GM12878 (cell line): ENCODE measurements at regions of chr1 and their contacts with region 1.

Region 1: GRCh38 chr1:37692078-37692833 is at the start of gene CDCA8:
- DNase-seq: peak; percentile 93
- ATAC-seq: peak; percentile 93
- H3K4me3 ChIP-seq: peak within 1 kb of the TSS; percentile 94
- H3K27ac ChIP-seq: peak within 1 kb of the TSS; percentile 92
- H3K4me1 ChIP-seq: peaks cover 12% of the 10 kb centered on the region
- H3K27me3 ChIP-seq: no peaks in the 10 kb centered on the region
- CTCF ChIP-seq: peak; percentile 70 to 72 (median 71)
- EP300 ChIP-seq: no peak
- POLR2A ChIP-seq: peak; percentile 95
- RAD21 ChIP-seq: no peak
- polyA plus RNA-seq, gene CDCA8: 60.2 to 60.6 TPM

Region 2: GRCh38 chr1:37474046-37474759 is 218.1 kb before region 1 on chr1 and contains the start of gene ZC3H12A:
- CTCF ChIA-PET with region 1: interaction called, 3 read pairs
- POLR2A ChIA-PET with region 1: interaction called, 11 read pairs
- RAD21 ChIA-PET with region 1: interaction called, 4 read pairs
- SMC1A ChIA-PET with region 1: interaction called, 6 read pairs
- in situ Hi-C with region 1: no loop called
- intact Hi-C with region 1: loop called (anchors 5 kb)
- DNase-seq: peak; percentile 57
- ATAC-seq: peak; percentile 65
- H3K4me3 ChIP-seq: peak within 1 kb of the TSS; percentile 99
- H3K27ac ChIP-seq: peak within 1 kb of the TSS; percentile 99
- H3K4me1 ChIP-seq: peaks cover 20% of the 10 kb centered on the region
- H3K27me3 ChIP-seq: no peaks in the 10 kb centered on the region
- CTCF ChIP-seq: no peak
- EP300 ChIP-seq: no peak
- POLR2A ChIP-seq: peak; percentile 99
- RAD21 ChIP-seq: no peak
- polyA plus RNA-seq, gene ZC3H12A: 0.35 to 0.88 TPM

Region 3: DNA sequence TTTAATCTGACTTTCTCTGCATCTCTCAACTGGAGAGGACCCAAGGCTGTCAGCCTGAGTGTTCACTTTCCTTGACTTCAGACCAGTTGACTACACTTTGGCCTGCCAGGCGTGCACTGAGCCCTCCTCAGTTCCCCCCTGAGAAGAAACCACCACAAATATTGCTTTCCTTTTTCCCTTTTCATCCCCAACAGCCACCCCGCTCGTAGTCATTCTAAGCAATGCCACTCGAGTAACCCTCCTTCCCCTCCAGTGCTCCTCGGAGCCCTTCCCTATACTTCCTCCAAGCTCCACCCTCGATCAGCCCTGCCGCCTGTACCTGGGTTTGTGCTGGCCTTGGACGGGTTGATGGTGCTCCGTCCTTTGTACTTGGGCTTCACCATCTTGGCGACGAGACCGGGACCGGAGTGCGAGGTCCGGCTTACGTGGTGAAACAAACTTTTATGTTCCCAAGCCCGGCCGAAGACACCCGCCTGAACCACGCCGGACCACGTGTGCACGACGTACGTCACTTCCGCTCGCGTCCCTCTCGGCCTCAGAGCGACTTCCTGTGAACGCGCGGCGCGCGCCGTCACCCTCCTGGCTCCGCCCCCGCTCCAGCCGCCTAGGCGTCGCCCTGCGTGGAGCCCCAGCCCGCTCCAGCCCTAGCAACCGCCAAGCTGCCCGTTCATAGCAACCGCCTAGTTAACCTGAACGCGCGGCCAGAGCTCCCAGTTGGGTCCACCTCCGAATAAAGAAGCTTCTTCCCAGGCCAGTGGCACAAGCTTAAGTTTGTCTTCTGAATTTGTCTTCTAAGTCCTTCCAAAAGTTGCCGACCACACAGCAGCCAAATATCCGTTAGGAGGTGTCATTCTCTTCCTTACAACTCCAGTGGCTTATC is 96.6 kb before region 1 on chr1 and contains the start of gene GNL2:
- CTCF ChIA-PET with region 1: interaction called, 521 read pairs
- POLR2A ChIA-PET with region 1: interaction called, 4 read pairs
- RAD21 ChIA-PET with region 1: interaction called, 3 read pairs
- SMC1A ChIA-PET with region 1: interaction called, 6 read pairs
- in situ Hi-C with region 1: no loop called
- intact Hi-C with region 1: no loop called
- DNase-seq: peak; percentile 83
- ATAC-seq: peak; percentile 99
- H3K4me3 ChIP-seq: peak within 1 kb of the TSS; percentile 77
- H3K27ac ChIP-seq: peak within 1 kb of the TSS; percentile 84
- H3K4me1 ChIP-seq: peaks cover 7% of the 10 kb centered on the region
- H3K27me3 ChIP-seq: no peaks in the 10 kb centered on the region
- CTCF ChIP-seq: no peak
- EP300 ChIP-seq: no peak
- POLR2A ChIP-seq: peak; percentile 96
- RAD21 ChIP-seq: no peak
- polyA plus RNA-seq, gene GNL2: 64.2 to 91.3 TPM

Region 4: DNA sequence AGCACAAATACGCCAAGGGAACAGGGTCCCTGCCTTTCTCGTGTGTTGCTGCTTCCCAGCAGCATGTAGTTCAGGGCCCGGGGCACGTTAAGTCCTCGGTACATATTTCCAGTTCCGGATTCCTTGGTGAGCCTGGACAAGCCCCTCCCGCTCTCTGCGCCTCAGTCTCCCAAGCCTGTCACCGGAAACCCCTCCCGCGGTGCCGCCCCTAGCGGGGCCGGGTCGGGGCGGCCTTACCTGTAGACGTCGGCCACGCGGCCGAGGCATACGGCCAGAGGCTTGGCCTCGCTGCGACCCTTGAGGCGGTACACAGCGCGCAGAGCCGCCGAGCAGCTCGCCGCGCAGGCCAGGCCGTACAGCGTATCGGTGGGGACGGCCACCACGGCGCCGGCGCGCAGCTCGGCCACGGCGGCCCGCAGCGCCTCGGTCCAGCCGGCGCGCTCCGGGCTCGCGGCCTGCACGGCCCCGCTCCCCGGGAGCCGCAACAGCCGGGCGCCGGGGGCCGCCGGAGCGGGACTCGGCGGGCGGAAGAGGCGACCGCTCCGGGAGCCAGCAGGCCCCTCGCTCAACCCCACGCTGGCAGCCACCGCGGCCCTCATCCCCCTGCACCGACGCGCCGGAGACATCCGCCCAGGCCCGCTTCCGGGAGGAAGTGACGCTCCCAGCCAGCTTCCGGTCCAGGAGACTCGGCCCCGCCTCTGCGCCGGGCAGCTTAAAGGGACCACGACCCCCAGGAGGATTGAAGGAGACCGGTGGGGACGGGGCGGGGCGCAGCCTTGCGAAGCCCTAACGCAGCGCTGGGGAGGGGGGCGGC is 115.5 kb after region 1 on chr1 and contains the starts of genes C1orf122 and YRDC:
- CTCF ChIA-PET with region 1: no interaction called
- POLR2A ChIA-PET with region 1: interaction called, 3 read pairs
- RAD21 ChIA-PET with region 1: interaction called, 5 read pairs
- SMC1A ChIA-PET with region 1: no interaction called
- in situ Hi-C with region 1: no loop called
- intact Hi-C with region 1: loop called (anchors 1 kb)
- DNase-seq: peak; percentile 35
- ATAC-seq: peak; percentile 93
- H3K4me3 ChIP-seq: peak within 1 kb of the TSS; percentile 91
- H3K27ac ChIP-seq: peak within 1 kb of the TSS; percentile 81
- H3K4me1 ChIP-seq: peaks cover 11% of the 10 kb centered on the region
- H3K27me3 ChIP-seq: no peaks in the 10 kb centered on the region
- CTCF ChIP-seq: no peak
- EP300 ChIP-seq: no peak
- POLR2A ChIP-seq: peak; percentile 98
- RAD21 ChIP-seq: no peak
- polyA plus RNA-seq, gene C1orf122: 1.6 to 8.4 TPM
- polyA plus RNA-seq, gene YRDC: 4.5 to 15.3 TPM

Region 5: GRCh38 chr1:37999430-38000232 is 307.4 kb after region 1 on chr1:
- CTCF ChIA-PET with region 1: no interaction called
- POLR2A ChIA-PET with region 1: no interaction called
- RAD21 ChIA-PET with region 1: no interaction called
- SMC1A ChIA-PET with region 1: no interaction called
- in situ Hi-C with region 1: no loop called
- intact Hi-C with region 1: loop called (anchors 5 kb)
- DNase-seq: no peak
- ATAC-seq: 0 out of 3 replicates have a peak, but pooled peaks have one; percentile 12
- H3K4me3 ChIP-seq: no peak overlapping the region
- H3K27ac ChIP-seq: peak overlapping the region; percentile 56
- H3K4me1 ChIP-seq: peaks cover 27% of the 10 kb centered on the region
- H3K27me3 ChIP-seq: 0 out of 4 replicates have a peak, but pooled peaks cover 0 to under 1% of the 10 kb centered on the region in 2 experiments
- CTCF ChIP-seq: no peak
- EP300 ChIP-seq: no peak
- POLR2A ChIP-seq: no peak
- RAD21 ChIP-seq: no peak